ENCODE measurements at regions of chr7 and their contacts with region 1.

Region 1: DNA sequence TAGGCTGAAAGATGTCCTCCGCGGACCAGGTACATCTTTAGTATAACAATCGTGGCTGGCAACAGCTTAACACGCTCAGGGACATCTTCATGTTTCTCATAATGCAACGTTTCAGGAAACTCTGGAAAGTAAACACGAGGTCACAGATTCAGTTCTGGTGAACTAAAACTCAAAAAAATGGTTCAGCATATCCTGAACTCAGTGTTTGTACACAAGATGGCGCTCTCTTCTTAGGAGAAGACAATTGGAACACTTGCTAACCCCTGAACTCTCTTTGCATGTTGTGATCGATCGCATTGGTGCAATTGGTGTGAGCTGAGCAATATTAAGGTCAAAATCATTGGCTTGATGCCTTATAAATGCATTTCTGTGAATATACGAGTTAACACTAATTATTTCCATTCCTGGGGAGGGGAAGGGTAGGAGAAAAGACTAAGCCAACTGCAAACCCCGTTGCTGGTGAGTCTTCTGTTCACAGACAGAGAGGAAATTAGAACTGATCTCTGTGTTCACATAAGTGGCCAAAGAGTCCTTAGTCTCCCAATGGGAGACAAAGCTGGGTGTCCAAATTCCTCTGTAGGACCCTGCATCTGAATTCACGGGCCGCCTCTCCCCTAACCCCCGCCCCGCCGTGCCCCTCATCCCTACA is 52.6 kb upstream of the FAM180A start:
- DNase-seq: peak; percentile 69 to 77 (median 71)
- H3K4me3 ChIP-seq: peak overlapping the region in 4 of 7 experiments; percentile 38 to 61 (median 54)
- H3K27ac ChIP-seq: no peak overlapping the region
- H3K4me1 ChIP-seq: peaks cover 2 to 6% (median 4%) of the 10 kb centered on the region in 4 experiments
- H3K27me3 ChIP-seq: peaks cover 0 to 5% (median 0%) of the 10 kb centered on the region in 5 experiments

Region 2: DNA sequence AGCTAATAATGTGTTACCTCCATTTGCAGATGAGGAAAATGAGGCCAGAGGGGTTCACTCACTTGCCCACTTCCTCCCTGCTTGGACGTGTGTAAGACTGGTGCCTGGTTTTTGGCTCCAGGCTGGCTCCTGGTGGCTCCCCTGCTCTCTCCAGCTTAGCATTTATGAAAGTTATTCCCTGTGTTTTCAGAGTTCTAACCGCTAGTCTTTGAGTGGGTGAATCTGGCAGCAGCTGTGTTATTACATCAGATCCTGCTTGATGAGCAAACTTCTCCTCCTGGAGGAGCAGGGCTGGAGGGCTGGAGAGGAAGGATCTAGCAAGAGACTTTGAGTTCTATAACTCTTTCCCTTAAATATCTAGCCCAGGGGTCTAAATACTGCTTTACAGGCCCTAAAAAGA is 895.8 kb before region 1 on chr7:
- CTCF ChIA-PET with region 1: no interaction called
- POLR2A ChIA-PET with region 1: no interaction called
- DNase-seq: no peak
- H3K4me3 ChIP-seq: no peak overlapping the region
- H3K27ac ChIP-seq: no peak overlapping the region
- H3K4me1 ChIP-seq: no peaks in the 10 kb centered on the region
- H3K27me3 ChIP-seq: no peaks in the 10 kb centered on the region

Region 3: DNA sequence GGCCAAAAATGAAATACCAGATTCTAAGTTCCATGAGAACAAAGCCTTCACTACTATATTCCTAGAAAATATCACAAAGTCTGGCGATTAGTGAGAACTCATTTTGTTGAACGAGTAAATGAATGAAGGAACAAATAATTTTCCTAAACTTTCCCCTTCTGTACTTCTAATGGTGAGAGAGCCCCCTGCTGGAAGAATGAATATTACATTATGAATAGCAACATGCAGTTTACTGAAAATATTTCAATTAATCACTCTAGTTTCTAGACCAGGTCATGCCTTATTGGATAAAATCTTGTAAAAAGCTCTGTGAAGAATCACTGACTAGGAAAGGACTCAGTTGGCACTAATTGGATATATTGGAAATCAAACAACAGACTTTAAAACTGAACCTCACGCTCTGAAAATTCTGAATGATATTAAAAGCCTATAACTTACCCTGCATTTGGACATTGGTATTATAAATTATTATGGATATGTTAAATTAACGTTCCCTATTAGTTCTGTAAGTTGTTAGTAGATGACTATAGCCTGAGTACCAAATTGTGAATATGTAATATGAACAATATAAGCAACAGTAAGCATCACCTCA is 208.4 kb after region 1 on chr7:
- CTCF ChIA-PET with region 1: interaction called, 121 read pairs
- POLR2A ChIA-PET with region 1: no interaction called
- DNase-seq: peak; percentile 48 to 66 (median 52)
- H3K4me3 ChIP-seq: no peak overlapping the region
- H3K27ac ChIP-seq: no peak overlapping the region
- H3K4me1 ChIP-seq: peaks cover 0 to 10% (median 3%) of the 10 kb centered on the region in 4 experiments
- H3K27me3 ChIP-seq: peaks cover 0 to 2% (median 0%) of the 10 kb centered on the region in 5 experiments